ENCODE measurements at regions of chr17 and their contacts with region 1.

Region 1: GRCh38 chr17:72592242-72592966 is 471.6 kb downstream of the SOX9 start:
- DNase-seq: peak; percentile 86
- H3K4me3 Mint-ChIP-seq: peak overlapping the region; percentile 91
- H3K27ac Mint-ChIP-seq: peak overlapping the region; percentile 90
- H3K4me1 Mint-ChIP-seq: peaks cover 11% of the 10 kb centered on the region
- H3K27me3 Mint-ChIP-seq: no peaks in the 10 kb centered on the region
- CTCF ChIP-seq: no peak

Region 2: DNA sequence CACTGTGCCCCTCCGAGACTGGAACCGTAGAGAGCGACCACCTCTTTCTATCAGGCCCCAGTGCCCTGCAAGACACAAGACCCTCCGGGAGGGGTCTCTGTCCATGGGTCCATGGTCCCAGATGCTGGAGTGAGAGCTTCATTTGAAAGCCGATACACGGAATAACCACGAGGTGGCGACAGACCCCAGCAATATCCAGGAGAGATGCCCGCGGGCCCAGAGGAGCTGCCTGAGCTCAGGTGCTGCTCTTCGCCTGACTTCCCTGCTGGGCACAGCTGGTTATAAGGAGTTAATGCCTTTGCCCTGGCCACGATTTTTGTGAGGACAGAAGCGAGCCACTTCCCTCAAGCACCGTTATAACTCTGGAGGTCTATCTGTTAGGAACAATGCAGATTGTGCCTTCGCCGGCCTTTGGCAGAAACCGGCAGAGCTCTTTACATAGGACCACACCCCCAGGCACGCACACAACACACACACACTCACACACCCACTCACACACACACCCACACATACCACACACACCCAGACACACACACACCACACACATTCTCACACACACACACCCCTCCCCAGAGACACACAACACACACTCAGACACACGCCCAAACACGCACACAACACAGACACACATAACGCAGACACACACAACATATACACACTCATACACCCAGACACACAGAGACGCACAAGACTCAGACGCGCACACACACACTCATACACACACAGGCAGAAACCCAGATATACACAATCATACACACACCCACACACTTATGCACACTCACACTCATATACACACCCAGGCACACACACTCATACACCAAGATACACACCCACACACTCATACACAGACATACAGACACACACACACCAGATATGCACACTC is 35.2 kb before region 1 on chr17:
- CTCF ChIA-PET with region 1: interaction called, 26 read pairs
- POLR2A ChIA-PET with region 1: interaction called, 34 read pairs
- intact Hi-C with region 1: loop called (anchors 2 kb)
- DNase-seq: peak; percentile 81
- H3K4me3 Mint-ChIP-seq: no peak overlapping the region
- H3K27ac Mint-ChIP-seq: no peak overlapping the region
- H3K4me1 Mint-ChIP-seq: peaks cover 21% of the 10 kb centered on the region
- H3K27me3 Mint-ChIP-seq: no peaks in the 10 kb centered on the region
- CTCF ChIP-seq: peak; percentile 85

Region 3: DNA sequence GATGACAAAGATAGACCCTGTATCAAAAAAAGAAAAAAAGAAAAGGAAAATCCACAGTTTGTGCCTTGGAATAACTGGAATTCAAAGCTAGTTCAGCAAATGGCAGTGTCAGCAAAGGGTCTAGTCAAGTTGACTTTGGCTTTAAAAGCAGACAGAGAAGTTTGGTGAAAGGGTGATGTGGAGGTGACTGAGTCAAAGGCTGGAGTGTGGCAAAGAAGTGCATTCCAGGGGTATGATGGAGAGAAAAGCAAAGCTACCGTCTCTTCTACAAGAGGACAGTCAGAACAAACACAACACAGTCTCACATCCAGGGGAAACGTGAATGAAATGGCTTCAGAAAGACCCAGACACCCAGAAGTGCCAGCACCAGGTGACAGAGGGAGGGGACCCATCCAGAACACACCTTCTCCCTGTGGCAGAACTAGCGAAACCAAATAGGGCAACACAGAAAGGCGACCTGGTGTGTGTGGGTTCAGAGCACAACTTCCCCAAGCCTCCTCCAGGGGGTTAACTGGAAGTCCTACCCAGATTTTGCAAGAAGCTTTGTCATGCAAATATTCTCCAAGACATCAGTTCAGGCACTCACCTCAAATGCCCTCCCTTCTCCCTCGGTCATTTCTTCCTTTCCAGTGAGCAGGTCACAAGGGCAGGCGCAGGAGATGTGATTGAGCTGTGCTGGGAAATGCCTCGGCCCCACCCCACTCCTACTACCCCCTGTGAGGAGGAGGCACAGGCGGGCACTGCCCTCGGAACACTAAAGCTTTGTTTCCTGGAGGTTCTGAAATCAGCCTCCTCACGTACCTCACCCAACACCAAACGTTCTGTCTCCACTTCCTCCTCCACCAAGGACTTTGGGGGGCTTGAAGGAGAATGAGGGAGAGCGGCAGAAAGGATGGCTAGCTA is 10.4 kb after region 1 on chr17:
- CTCF ChIA-PET with region 1: interaction called, 4 read pairs
- POLR2A ChIA-PET with region 1: interaction called, 48 read pairs
- intact Hi-C with region 1: no loop called
- DNase-seq: peak; percentile 91
- H3K4me3 Mint-ChIP-seq: peak overlapping the region; percentile 34
- H3K27ac Mint-ChIP-seq: peak overlapping the region; percentile 85
- H3K4me1 Mint-ChIP-seq: peaks cover 45% of the 10 kb centered on the region
- H3K27me3 Mint-ChIP-seq: no peaks in the 10 kb centered on the region
- CTCF ChIP-seq: peak; percentile 36

Region 4: GRCh38 chr17:72661093-72661944 is 68.9 kb after region 1 on chr17:
- CTCF ChIA-PET with region 1: no interaction called
- POLR2A ChIA-PET with region 1: interaction called, 13 read pairs
- intact Hi-C with region 1: loop called (anchors 2 kb)
- DNase-seq: peak; percentile 78
- H3K4me3 Mint-ChIP-seq: no peak overlapping the region
- H3K27ac Mint-ChIP-seq: peak overlapping the region; percentile 78
- H3K4me1 Mint-ChIP-seq: peaks cover 15% of the 10 kb centered on the region
- H3K27me3 Mint-ChIP-seq: no peaks in the 10 kb centered on the region
- CTCF ChIP-seq: peak; percentile 43

Region 5: GRCh38 chr17:72715906-72716572 is 123.6 kb after region 1 on chr17:
- CTCF ChIA-PET with region 1: interaction called, 3 read pairs
- POLR2A ChIA-PET with region 1: interaction called, 29 read pairs
- intact Hi-C with region 1: loop called (anchors 1 kb)
- DNase-seq: peak; percentile 92
- H3K4me3 Mint-ChIP-seq: peak overlapping the region; percentile 72
- H3K27ac Mint-ChIP-seq: peak overlapping the region; percentile 100
- H3K4me1 Mint-ChIP-seq: peaks cover 29% of the 10 kb centered on the region
- H3K27me3 Mint-ChIP-seq: no peaks in the 10 kb centered on the region
- CTCF ChIP-seq: no peak

Measured in MCF 10A (cell line).